Adrenal gland (tissue), 19 donors: ENCODE measurements at regions of chr2 and their contacts with region 1.

Region 1: GRCh38 chr2:75064691-75065396 is 106.4 kb downstream of the POLE4 start:
- DNase-seq: peak; percentile 27 to 76 (median 53)
- H3K4me3 ChIP-seq: no peak overlapping the region
- H3K27ac ChIP-seq: no peak overlapping the region
- H3K4me1 ChIP-seq: no peaks in the 10 kb centered on the region
- H3K27me3 ChIP-seq: no peaks in the 10 kb centered on the region
- CTCF ChIP-seq: peak; percentile 36 to 80 (median 66)
- POLR2A ChIP-seq: no peak

Region 2: DNA sequence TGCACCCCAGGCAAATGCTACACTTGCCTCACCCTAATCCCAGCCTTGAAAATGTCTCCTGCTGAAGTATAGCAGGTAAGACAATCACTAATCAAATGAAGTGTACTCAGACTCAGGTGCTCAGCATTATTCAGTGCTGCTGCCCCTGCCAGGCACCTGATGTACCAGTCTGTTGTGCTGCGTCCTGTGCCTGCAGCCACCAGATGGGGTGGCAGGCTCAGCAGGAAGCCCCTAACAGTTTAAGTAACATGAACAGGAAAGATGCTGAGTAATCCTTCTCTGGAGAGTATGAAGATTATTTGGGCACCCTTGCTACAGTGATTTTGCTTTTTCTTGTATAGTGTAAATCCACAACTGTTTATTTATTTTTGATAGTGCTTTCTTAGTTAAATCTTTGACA is 65.3 kb after region 1 on chr2:
- intact Hi-C with region 1: no loop called
- DNase-seq: no peak
- H3K4me3 ChIP-seq: no peak overlapping the region
- H3K27ac ChIP-seq: no peak overlapping the region
- H3K4me1 ChIP-seq: peaks cover 0 to 6% of the 10 kb centered on the region in 2 donors
- H3K27me3 ChIP-seq: no peaks in the 10 kb centered on the region
- CTCF ChIP-seq: peak in 2 of 6 experiments; percentile 12 to 14
- POLR2A ChIP-seq: no peak

Region 3: GRCh38 chr2:75403991-75404428 is 339.2 kb after region 1 on chr2:
- intact Hi-C with region 1: loop called in 1 of 2 experiments (anchors 10 kb)
- DNase-seq: peak in 1 of 7 donors; percentile 5
- H3K4me3 ChIP-seq: no peak overlapping the region
- H3K27ac ChIP-seq: no peak overlapping the region
- H3K4me1 ChIP-seq: no peaks in the 10 kb centered on the region
- H3K27me3 ChIP-seq: peaks cover 12% of the 10 kb centered on the region
- CTCF ChIP-seq: peak; percentile 58 to 81 (median 71)
- POLR2A ChIP-seq: no peak